ENCODE measurements at regions of chr7 and their contacts with region 1.

Region 1: GRCh38 chr7:47937065-47937683 is 11.1 kb downstream of the PKD1L1 start:
- DNase-seq: no peak
- H3K4me3 ChIP-seq: no peak overlapping the region
- H3K27ac ChIP-seq: no peak overlapping the region
- H3K4me1 ChIP-seq: peaks cover 22% of the 10 kb centered on the region
- H3K27me3 ChIP-seq: no peaks in the 10 kb centered on the region
- CTCF ChIP-seq: no peak
- POLR2A ChIP-seq: no peak

Region 2: GRCh38 chr7:47482013-47482875 is 454.9 kb before region 1 on chr7:
- CTCF ChIA-PET with region 1: no interaction called
- POLR2A ChIA-PET with region 1: no interaction called
- dilution Hi-C with region 1: no loop called
- intact Hi-C with region 1: loop called (anchors 1 kb)
- DNase-seq: peak; percentile 83
- H3K4me3 ChIP-seq: no peak overlapping the region
- H3K27ac ChIP-seq: peak overlapping the region; percentile 89
- H3K4me1 ChIP-seq: peaks cover 16% of the 10 kb centered on the region
- H3K27me3 ChIP-seq: no peaks in the 10 kb centered on the region
- CTCF ChIP-seq: no peak
- POLR2A ChIP-seq: peak; percentile 49

Region 3: DNA sequence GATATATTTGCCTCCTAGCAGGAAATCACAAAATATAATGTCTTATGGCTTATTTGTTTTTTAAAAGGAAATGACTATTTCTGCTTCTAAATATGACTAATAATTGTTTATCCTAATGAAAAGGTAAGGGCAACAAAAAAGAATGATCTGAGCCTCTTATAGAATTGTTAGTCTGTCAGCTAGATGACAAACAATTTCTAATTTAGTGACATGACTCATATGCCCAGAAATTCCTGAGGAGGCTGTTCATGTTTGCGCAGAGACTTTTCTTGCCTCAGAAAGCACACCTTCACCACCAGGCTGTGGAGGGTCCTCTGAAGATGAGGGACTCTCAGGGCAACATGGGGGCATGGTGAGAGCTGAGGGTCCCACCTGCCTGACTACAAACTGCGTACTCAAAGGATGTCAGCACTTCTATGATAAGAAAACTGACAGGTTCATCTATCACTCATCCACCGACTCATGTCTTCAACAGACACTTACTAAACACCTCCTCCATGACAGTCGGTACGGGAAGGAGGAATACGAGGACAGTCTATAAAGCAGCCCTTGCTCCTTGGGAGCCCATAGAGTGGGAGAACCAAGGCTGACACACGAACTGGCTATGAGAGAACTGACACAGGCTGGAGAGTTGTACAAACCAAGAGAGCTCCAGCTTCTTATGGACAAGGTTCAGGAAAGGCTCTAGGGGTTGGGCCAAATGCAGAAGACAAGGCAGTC is 90.9 kb before region 1 on chr7:
- CTCF ChIA-PET with region 1: no interaction called
- POLR2A ChIA-PET with region 1: no interaction called
- dilution Hi-C with region 1: no loop called
- intact Hi-C with region 1: loop called (anchors 1 kb)
- DNase-seq: peak; percentile 66
- H3K4me3 ChIP-seq: no peak overlapping the region
- H3K27ac ChIP-seq: peak overlapping the region; percentile 83
- H3K4me1 ChIP-seq: peaks cover 27% of the 10 kb centered on the region
- H3K27me3 ChIP-seq: no peaks in the 10 kb centered on the region
- CTCF ChIP-seq: no peak
- POLR2A ChIP-seq: no peak

Region 4: DNA sequence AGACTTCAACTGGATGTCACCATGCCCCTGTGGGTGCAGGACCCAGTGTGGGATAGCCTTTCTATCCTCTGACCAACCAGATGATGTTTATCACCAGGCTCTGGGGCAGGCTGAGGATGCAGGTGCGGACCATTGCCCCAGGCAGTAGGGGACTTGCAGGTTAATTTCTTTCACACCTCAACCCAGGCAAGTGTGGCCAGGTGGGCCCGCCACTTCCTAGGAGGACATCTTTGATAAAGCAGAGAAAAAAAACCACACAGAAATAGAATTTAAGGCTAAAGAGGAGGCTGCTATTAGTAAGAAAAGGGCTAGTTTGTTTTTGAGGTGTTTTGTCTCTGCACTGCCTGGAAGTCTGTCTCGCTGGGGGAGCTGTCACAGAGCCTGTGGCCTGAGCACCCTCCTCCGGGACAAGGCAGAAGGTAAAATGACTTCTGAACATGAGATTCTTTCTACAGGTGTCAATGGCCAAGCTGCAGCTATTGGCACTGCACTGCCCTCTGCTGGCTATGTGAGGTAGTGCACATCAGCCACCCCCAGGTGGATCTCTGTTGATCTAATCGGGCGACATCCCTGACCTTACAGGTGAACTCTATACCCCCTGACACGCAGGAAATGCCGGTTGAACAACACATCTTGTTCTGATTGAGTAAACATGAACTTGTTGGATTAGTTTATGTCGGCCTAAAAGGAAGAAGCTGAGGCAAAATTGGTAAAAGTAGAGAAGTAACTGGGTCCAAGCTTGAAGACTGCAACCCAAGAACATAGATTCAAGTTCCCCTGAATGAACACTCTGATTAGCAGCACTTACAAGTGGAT is 172.9 kb after region 1 on chr7:
- CTCF ChIA-PET with region 1: interaction called, 11 read pairs
- POLR2A ChIA-PET with region 1: no interaction called
- dilution Hi-C with region 1: no loop called
- intact Hi-C with region 1: no loop called
- DNase-seq: peak; percentile 69
- H3K4me3 ChIP-seq: no peak overlapping the region
- H3K27ac ChIP-seq: no peak overlapping the region
- H3K4me1 ChIP-seq: no peaks in the 10 kb centered on the region
- H3K27me3 ChIP-seq: no peaks in the 10 kb centered on the region
- CTCF ChIP-seq: peak; percentile 97
- POLR2A ChIP-seq: no peak